Endothelial cell of umbilical vein (primary cell): ENCODE measurements at regions of chr16 and their contacts with region 1.

Region 1: GRCh38 chr16:28069971-28070794 is 6.7 kb upstream of the GSG1L start:
- DNase-seq: no peak
- H3K4me3 ChIP-seq: no peak overlapping the region
- H3K27ac ChIP-seq: no peak overlapping the region
- H3K4me1 ChIP-seq: no peaks in the 10 kb centered on the region
- H3K27me3 ChIP-seq: peaks cover 0 to 6% of the 10 kb centered on the region in 2 experiments
- CTCF ChIP-seq: no peak
- POLR2A ChIP-seq: no peak

Region 2: GRCh38 chr16:27600381-27600780 is 469.8 kb before region 1 on chr16:
- CTCF ChIA-PET with region 1: interaction called, 4 read pairs
- POLR2A ChIA-PET with region 1: no interaction called
- dilution Hi-C with region 1: no loop called
- intact Hi-C with region 1: loop called (anchors 1 kb)
- DNase-seq: no peak
- H3K4me3 ChIP-seq: no peak overlapping the region
- H3K27ac ChIP-seq: no peak overlapping the region
- H3K4me1 ChIP-seq: no peaks in the 10 kb centered on the region
- H3K27me3 ChIP-seq: no peaks in the 10 kb centered on the region
- CTCF ChIP-seq: no peak
- POLR2A ChIP-seq: no peak

Region 3: GRCh38 chr16:27721531-27722181 is 348.5 kb before region 1 on chr16:
- CTCF ChIA-PET with region 1: no interaction called
- POLR2A ChIA-PET with region 1: no interaction called
- dilution Hi-C with region 1: no loop called
- intact Hi-C with region 1: no loop called
- DNase-seq: no peak
- H3K4me3 ChIP-seq: no peak overlapping the region
- H3K27ac ChIP-seq: no peak overlapping the region
- H3K4me1 ChIP-seq: no peaks in the 10 kb centered on the region
- H3K27me3 ChIP-seq: no peaks in the 10 kb centered on the region
- CTCF ChIP-seq: no peak
- POLR2A ChIP-seq: no peak

Region 4: GRCh38 chr16:27972500-27972899 is 97.7 kb before region 1 on chr16:
- CTCF ChIA-PET with region 1: interaction called, 80 read pairs
- POLR2A ChIA-PET with region 1: no interaction called
- dilution Hi-C with region 1: no loop called
- intact Hi-C with region 1: loop called (anchors 1 kb)
- DNase-seq: peak; percentile 49
- H3K4me3 ChIP-seq: no peak overlapping the region
- H3K27ac ChIP-seq: no peak overlapping the region
- H3K4me1 ChIP-seq: no peaks in the 10 kb centered on the region
- H3K27me3 ChIP-seq: no peaks in the 10 kb centered on the region
- CTCF ChIP-seq: peak; percentile 32 to 55
- POLR2A ChIP-seq: no peak

Region 5: DNA sequence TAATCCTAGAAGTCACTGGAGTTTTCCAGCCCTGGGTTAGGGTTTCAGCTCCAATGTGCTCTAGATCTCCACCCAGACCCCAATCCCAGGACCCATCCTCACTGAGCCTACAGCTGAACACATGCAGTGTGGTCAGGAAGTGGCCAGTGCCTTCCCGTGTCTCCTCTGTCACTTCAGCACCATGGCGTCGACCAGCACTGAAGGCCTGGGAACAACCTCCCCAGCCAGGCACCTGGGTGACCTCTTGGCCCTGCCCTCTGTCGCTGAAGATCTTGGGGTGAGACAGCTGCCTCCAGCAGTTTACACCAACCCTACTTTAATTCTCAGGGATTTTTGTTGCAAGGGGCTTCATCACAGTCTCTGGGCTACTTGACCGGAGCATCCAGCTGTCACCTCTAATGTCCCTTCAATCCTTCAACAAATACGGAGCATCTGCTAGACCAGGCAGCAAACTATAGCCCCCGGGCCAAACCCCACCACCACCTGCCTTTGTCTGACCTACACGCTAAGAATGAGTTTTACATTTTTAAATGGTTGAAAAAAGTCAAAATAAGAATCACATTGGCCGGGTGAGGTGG is 11.3 kb after region 1 on chr16:
- CTCF ChIA-PET with region 1: interaction called, 12 read pairs
- POLR2A ChIA-PET with region 1: no interaction called
- dilution Hi-C with region 1: no loop called
- intact Hi-C with region 1: no loop called
- DNase-seq: no peak
- H3K4me3 ChIP-seq: no peak overlapping the region
- H3K27ac ChIP-seq: no peak overlapping the region
- H3K4me1 ChIP-seq: no peaks in the 10 kb centered on the region
- H3K27me3 ChIP-seq: no peaks in the 10 kb centered on the region
- CTCF ChIP-seq: no peak
- POLR2A ChIP-seq: no peak

Region 6: GRCh38 chr16:28218104-28218503 is 147.9 kb after region 1 on chr16:
- CTCF ChIA-PET with region 1: interaction called, 15 read pairs
- POLR2A ChIA-PET with region 1: no interaction called
- dilution Hi-C with region 1: no loop called
- intact Hi-C with region 1: no loop called
- DNase-seq: peak; percentile 52
- H3K4me3 ChIP-seq: no peak overlapping the region
- H3K27ac ChIP-seq: no peak overlapping the region
- H3K4me1 ChIP-seq: peaks cover 2% of the 10 kb centered on the region
- H3K27me3 ChIP-seq: no peaks in the 10 kb centered on the region
- CTCF ChIP-seq: peak; percentile 31 to 71
- POLR2A ChIP-seq: no peak